ENCODE measurements at regions of chr7 and their contacts with region 1.

Region 1: GRCh38 chr7:50793115-50793946 is 10.6 kb upstream of the GRB10 start:
- DNase-seq: peak; percentile 77
- H3K4me3 ChIP-seq: peak overlapping the region; percentile 34
- H3K27ac ChIP-seq: no peak overlapping the region
- H3K4me1 ChIP-seq: peaks cover 4% of the 10 kb centered on the region
- H3K27me3 ChIP-seq: peaks cover 6% of the 10 kb centered on the region
- CTCF ChIP-seq: no peak

Region 2: GRCh38 chr7:51067757-51068156 is 274.4 kb after region 1 on chr7:
- intact Hi-C with region 1: loop called (anchors 10 kb)
- DNase-seq: peak; percentile 72
- H3K4me3 ChIP-seq: no peak overlapping the region
- H3K27ac ChIP-seq: no peak overlapping the region
- H3K4me1 ChIP-seq: no peaks in the 10 kb centered on the region
- H3K27me3 ChIP-seq: no peaks in the 10 kb centered on the region
- CTCF ChIP-seq: peak; percentile 64